HepG2 (cell line): ENCODE measurements at regions of chr6 and their contacts with region 1.

Region 1: GRCh38 chr6:56370561-56371211 is 123.3 kb upstream of the COL21A1 start:
- DNase-seq: peak; percentile 58
- ATAC-seq: peak; percentile 36
- H3K4me3 ChIP-seq: peak overlapping the region in 2 of 3 experiments; percentile 19 to 27; a peak in 2 of 6 replicates
- H3K27ac ChIP-seq: no peak overlapping the region
- H3K4me1 ChIP-seq: peaks cover 62% of the 10 kb centered on the region
- H3K27me3 ChIP-seq: no peaks in the 10 kb centered on the region
- CTCF ChIP-seq: no peak
- EP300 ChIP-seq: no peak
- POLR2A ChIP-seq: no peak
- RAD21 ChIP-seq: no peak

Region 2: DNA sequence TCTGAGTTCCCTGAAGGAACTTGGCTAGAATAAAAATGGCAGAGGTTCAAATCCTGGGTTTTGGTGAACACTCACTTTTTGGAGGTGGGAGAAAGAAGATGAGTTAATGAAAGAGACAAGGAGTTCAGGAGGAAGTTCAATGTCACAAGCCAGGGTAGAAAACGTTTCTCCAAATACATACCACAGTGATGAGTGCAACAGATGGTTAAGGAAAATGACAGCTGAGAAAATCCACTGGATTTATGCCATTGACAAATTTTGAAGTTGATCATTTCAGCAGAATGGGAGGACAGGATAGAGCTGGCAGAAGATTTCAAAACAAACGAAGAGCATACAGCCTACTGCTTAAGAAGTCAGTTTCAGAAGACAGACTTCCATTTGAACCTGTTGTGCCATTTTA is 920.7 kb before region 1 on chr6:
- CTCF ChIA-PET with region 1: no interaction called
- POLR2A ChIA-PET with region 1: no interaction called
- in situ Hi-C with region 1: no loop called
- intact Hi-C with region 1: no loop called
- DNase-seq: no peak
- ATAC-seq: no peak
- H3K4me3 ChIP-seq: no peak overlapping the region
- H3K27ac ChIP-seq: no peak overlapping the region
- H3K4me1 ChIP-seq: no peaks in the 10 kb centered on the region
- H3K27me3 ChIP-seq: no peaks in the 10 kb centered on the region
- CTCF ChIP-seq: no peak
- EP300 ChIP-seq: no peak
- POLR2A ChIP-seq: no peak
- RAD21 ChIP-seq: no peak

Region 3: GRCh38 chr6:56329271-56330050 is 41.2 kb before region 1 on chr6:
- CTCF ChIA-PET with region 1: no interaction called
- POLR2A ChIA-PET with region 1: no interaction called
- in situ Hi-C with region 1: no loop called
- intact Hi-C with region 1: no loop called
- DNase-seq: no peak
- ATAC-seq: no peak
- H3K4me3 ChIP-seq: no peak overlapping the region
- H3K27ac ChIP-seq: no peak overlapping the region
- H3K4me1 ChIP-seq: no peaks in the 10 kb centered on the region
- H3K27me3 ChIP-seq: no peaks in the 10 kb centered on the region; a peak in 1 of 5 replicates
- CTCF ChIP-seq: no peak
- EP300 ChIP-seq: no peak
- POLR2A ChIP-seq: no peak
- RAD21 ChIP-seq: no peak

Region 4: DNA sequence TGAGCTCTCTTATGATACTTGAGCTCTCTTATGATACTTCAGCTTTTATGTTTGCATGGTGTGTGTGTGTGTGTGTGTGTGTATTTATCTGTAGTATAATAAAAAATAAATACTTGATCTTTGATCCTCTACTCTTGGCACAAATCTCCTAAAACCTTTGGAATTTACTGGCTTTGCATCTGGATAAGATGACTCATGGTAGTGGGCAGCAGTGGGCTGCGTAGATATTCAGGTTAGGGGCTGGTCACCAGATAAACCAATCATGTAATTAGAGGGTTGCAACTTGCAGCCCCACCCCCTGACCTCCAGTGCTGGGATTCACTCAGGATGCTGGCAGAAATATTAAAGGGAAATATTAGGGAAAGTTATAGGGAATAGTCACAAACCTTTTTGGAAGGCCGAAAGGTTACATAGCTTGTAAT is 28.6 kb after region 1 on chr6:
- CTCF ChIA-PET with region 1: no interaction called
- POLR2A ChIA-PET with region 1: interaction called, 17 read pairs
- in situ Hi-C with region 1: no loop called
- intact Hi-C with region 1: loop called (anchors 1 kb)
- DNase-seq: peak; percentile 93
- ATAC-seq: peak; percentile 88
- H3K4me3 ChIP-seq: peak overlapping the region; percentile 11 to 52 (median 29); a peak in 3 of 6 replicates
- H3K27ac ChIP-seq: peak overlapping the region; percentile 97
- H3K4me1 ChIP-seq: peaks cover 77% of the 10 kb centered on the region
- H3K27me3 ChIP-seq: no peaks in the 10 kb centered on the region
- CTCF ChIP-seq: no peak
- EP300 ChIP-seq: peak in 1 of 2 experiments; percentile 40; a peak in 1 of 4 replicates
- POLR2A ChIP-seq: no peak
- RAD21 ChIP-seq: no peak

Region 5: DNA sequence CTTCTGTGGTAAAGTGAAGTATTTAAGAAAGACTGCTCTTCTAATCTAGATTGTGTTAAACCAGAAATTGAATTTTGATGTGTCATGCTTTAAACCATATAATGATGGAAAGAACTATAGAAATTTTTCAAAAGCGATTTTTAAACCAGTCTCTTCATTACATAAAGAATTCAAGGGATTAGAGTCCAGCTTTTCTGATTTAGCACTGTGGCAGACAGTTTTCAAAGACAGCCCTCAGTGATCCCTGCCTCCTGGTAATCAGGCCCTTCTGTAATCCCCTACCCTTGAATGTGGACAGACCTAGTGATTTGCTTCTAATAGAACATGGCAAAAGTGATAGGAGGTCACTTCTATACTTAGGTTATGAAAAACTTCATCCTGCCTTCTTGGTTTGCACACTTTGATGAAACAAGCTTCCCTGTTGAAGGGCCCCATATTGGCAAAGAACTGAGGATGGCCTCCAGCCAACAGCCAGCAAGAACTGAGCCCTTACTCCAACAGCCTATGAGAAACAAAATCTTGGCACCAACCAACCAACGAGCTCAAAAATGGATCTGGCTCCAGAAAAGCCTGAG is 80.6 kb after region 1 on chr6:
- CTCF ChIA-PET with region 1: no interaction called
- POLR2A ChIA-PET with region 1: interaction called, 3 read pairs
- in situ Hi-C with region 1: no loop called
- intact Hi-C with region 1: loop called (anchors 5 kb)
- DNase-seq: no peak
- ATAC-seq: peak; percentile 77
- H3K4me3 ChIP-seq: no peak overlapping the region
- H3K27ac ChIP-seq: peak overlapping the region; percentile 49
- H3K4me1 ChIP-seq: peaks cover 24% of the 10 kb centered on the region
- H3K27me3 ChIP-seq: no peaks in the 10 kb centered on the region
- CTCF ChIP-seq: no peak
- EP300 ChIP-seq: no peak
- POLR2A ChIP-seq: no peak
- RAD21 ChIP-seq: no peak

Region 6: DNA sequence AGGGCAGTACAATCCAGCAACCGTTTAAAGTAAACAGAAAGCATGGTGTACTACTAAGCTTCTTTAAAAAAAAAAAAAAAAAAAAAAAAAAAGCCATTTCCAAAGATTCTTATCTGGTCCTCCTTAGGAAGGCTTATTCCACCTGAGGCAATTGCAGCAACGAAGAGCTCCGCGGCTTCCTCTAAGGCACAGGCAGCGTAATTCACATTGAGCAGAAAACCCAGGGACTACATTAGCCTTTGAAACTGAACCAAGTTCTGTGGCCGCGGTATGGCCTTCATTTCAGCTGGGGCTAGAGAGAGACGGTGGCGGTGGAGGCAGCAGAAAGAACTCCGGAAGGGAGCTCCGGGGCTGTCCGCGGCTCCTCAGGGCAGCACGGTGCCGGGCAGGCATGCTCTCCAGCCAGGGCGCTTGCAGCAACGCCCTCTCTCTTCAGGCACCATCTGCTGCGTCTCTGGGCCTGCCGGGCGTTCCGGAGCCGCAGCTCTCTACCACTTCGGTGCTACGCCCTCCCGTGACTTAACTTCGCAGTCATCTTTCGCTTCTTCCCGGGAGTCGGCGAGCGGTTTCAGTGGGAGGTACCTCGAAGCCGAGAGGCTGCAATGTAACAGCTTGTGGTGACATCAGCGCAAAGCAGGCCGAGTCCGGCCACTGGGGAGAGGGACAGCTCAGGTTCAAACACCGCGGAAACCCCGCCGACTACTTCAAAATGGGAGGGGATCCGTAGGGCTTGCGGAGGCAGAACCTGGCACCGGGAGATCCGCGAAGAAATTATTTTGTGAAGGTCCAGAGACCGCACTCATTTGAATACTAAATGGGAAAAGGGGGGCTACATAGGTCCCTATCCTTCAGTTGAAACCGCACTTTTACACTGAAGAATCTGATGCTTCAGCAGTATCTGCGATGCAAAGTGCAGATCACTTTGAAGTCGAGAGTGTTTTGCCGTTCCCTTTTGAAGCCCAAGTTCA is 172.0 kb after region 1 on chr6:
- CTCF ChIA-PET with region 1: no interaction called
- POLR2A ChIA-PET with region 1: interaction called, 10 read pairs
- in situ Hi-C with region 1: no loop called
- intact Hi-C with region 1: loop called (anchors 2 kb)
- DNase-seq: peak; percentile 98
- ATAC-seq: peak; percentile 96
- H3K4me3 ChIP-seq: peak overlapping the region; percentile 59 to 81 (median 76)
- H3K27ac ChIP-seq: peak overlapping the region; percentile 92
- H3K4me1 ChIP-seq: peaks cover 49% of the 10 kb centered on the region
- H3K27me3 ChIP-seq: no peaks in the 10 kb centered on the region; a peak in 1 of 5 replicates
- CTCF ChIP-seq: peak; percentile 85
- EP300 ChIP-seq: peak; percentile 17 to 38; a peak in 1 of 4 replicates
- POLR2A ChIP-seq: peak; percentile 82 to 96
- RAD21 ChIP-seq: peak; percentile 82

Region 7: DNA sequence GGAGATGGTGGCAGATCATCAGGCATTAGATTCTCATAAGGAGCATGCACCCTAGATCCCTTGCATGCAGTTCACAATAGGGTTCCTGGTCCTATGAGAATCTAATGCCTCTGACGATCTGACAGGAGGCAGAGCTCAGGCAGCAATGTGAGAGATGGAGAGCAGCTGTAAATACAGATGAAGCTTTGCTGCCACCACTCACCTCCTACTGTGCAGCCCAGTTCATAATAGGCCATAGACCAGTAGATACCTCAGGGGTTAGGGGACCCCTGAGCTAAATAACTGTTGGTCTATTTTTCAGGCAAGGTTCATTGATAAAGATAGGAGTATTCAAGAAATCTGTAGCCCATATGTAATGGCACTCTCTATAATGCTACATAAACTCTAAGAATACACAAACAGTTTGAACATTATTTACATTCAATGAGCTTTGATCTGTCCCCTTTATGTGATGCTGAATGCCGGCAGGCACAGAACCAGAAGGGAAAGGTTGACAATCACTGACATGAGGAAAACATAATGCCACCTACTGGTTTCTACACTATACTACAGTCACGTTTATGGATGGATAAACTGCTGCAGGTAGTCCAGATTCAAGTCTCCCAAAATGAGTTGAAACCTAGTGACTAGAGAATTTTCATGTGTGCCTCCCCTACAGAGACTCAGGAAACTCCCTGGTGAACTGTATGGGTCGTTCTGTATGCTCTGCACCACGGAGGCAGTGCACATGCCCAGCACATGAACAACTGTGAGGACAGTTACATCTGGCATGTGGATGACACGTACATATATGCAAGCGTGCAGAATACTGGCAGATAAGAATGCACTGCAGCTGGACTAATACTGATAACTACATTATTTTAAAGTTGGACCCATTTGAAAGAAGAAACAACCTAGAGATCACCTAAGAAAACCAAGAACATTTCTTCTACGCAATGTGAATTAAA is 200.0 kb after region 1 on chr6:
- CTCF ChIA-PET with region 1: interaction called, 8 read pairs
- POLR2A ChIA-PET with region 1: no interaction called
- in situ Hi-C with region 1: loop called (anchors 10 kb)
- intact Hi-C with region 1: loop called (anchors 1 kb)
- DNase-seq: peak; percentile 60
- ATAC-seq: peak; percentile 96
- H3K4me3 ChIP-seq: no peak overlapping the region
- H3K27ac ChIP-seq: no peak overlapping the region
- H3K4me1 ChIP-seq: peaks cover 29% of the 10 kb centered on the region
- H3K27me3 ChIP-seq: no peaks in the 10 kb centered on the region
- CTCF ChIP-seq: peak; percentile 82
- EP300 ChIP-seq: no peak
- POLR2A ChIP-seq: no peak
- RAD21 ChIP-seq: peak; percentile 42; the same call in 1 of the 2 replicates